Caco-2 (cell line): ENCODE measurements at regions of chr22 and their contacts with region 1.

Region 1: GRCh38 chr22:40177738-40178416 is at the start of gene TNRC6B:
- DNase-seq: peak; percentile 85 to 86
- H3K4me3 ChIP-seq: peak within 1 kb of the TSS; percentile 87
- H3K4me3 Mint-ChIP-seq: peak within 1 kb of the TSS; percentile 94
- H3K27ac Mint-ChIP-seq: peak within 1 kb of the TSS; percentile 94
- H3K4me1 ChIP-seq: peaks cover 41% of the 10 kb centered on the region
- H3K4me1 Mint-ChIP-seq: peaks cover 30% of the 10 kb centered on the region
- H3K27me3 ChIP-seq: no peaks in the 10 kb centered on the region
- H3K27me3 Mint-ChIP-seq: peaks cover 2% of the 10 kb centered on the region
- CTCF ChIP-seq: no peak
- total RNA-seq, gene TNRC6B: 22.1 and 23.5 TPM in 2 replicates

Region 2: DNA sequence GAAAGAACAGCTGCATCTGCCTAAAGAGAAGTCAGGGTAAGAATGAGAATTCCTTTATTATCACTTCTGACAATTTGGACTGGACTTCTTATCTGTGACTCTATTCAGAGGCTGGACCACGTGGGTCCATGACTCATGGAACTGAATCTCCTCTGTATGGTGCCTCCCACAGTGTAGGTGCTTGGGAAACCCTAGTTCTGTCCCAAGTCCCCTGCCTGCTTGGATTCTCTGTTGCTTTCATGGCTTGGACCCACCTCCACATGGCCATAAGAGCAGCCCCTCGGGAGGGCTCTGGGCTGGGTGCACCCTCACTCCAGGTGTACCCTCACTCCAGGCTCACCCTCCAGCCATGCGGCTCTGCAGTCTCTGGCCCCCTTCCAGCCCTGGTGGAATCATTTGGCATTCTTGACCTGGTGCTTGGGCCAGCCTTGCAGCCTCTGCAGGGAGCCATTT is 454.0 kb before region 1 on chr22:
- CTCF ChIA-PET with region 1: no interaction called
- POLR2A ChIA-PET with region 1: no interaction called
- intact Hi-C with region 1: no loop called
- DNase-seq: peak; percentile 46 to 48
- H3K4me3 ChIP-seq: no peak overlapping the region
- H3K4me3 Mint-ChIP-seq: peak overlapping the region; percentile 30
- H3K27ac Mint-ChIP-seq: peak overlapping the region; percentile 70
- H3K4me1 ChIP-seq: peaks cover 16% of the 10 kb centered on the region
- H3K4me1 Mint-ChIP-seq: peaks cover 12% of the 10 kb centered on the region
- H3K27me3 ChIP-seq: no peaks in the 10 kb centered on the region
- H3K27me3 Mint-ChIP-seq: no peaks in the 10 kb centered on the region
- CTCF ChIP-seq: no peak

Region 3: GRCh38 chr22:40055143-40055883 is 122.6 kb before region 1 on chr22:
- CTCF ChIA-PET with region 1: no interaction called
- POLR2A ChIA-PET with region 1: interaction called, 11 read pairs
- intact Hi-C with region 1: no loop called
- DNase-seq: no peak
- H3K4me3 ChIP-seq: no peak overlapping the region
- H3K4me3 Mint-ChIP-seq: no peak overlapping the region
- H3K27ac Mint-ChIP-seq: no peak overlapping the region
- H3K4me1 ChIP-seq: no peaks in the 10 kb centered on the region
- H3K4me1 Mint-ChIP-seq: no peaks in the 10 kb centered on the region
- H3K27me3 ChIP-seq: no peaks in the 10 kb centered on the region
- H3K27me3 Mint-ChIP-seq: no peaks in the 10 kb centered on the region
- CTCF ChIP-seq: no peak

Region 4: GRCh38 chr22:40156001-40156516 is 21.8 kb before region 1 on chr22:
- CTCF ChIA-PET with region 1: no interaction called
- POLR2A ChIA-PET with region 1: no interaction called
- intact Hi-C with region 1: loop called (anchors 1 kb)
- DNase-seq: peak; percentile 79 to 81
- H3K4me3 ChIP-seq: no peak overlapping the region
- H3K4me3 Mint-ChIP-seq: no peak overlapping the region
- H3K27ac Mint-ChIP-seq: peak overlapping the region; percentile 57
- H3K4me1 ChIP-seq: peaks cover 8% of the 10 kb centered on the region
- H3K4me1 Mint-ChIP-seq: peaks cover 21% of the 10 kb centered on the region
- H3K27me3 ChIP-seq: no peaks in the 10 kb centered on the region
- H3K27me3 Mint-ChIP-seq: no peaks in the 10 kb centered on the region
- CTCF ChIP-seq: peak in 1 of 2 experiments; percentile 16